HEK293 (cell line): ENCODE measurements at regions of chr10 and their contacts with region 1.

Region 1: GRCh38 chr10:113802997-113803396 is 50.9 kb downstream of the DCLRE1A start:
- H3K4me3 ChIP-seq: no peak overlapping the region
- H3K27ac ChIP-seq: no peak overlapping the region
- H3K4me1 ChIP-seq: no peaks in the 10 kb centered on the region
- CTCF ChIP-seq: no peak

Region 2: GRCh38 chr10:113515601-113516000 is 287.4 kb before region 1 on chr10:
- CTCF ChIA-PET with region 1: no interaction called
- POLR2A ChIA-PET with region 1: no interaction called
- H3K4me3 ChIP-seq: no peak overlapping the region
- H3K27ac ChIP-seq: no peak overlapping the region
- H3K4me1 ChIP-seq: peaks cover 8% of the 10 kb centered on the region
- CTCF ChIP-seq: no peak

Region 3: DNA sequence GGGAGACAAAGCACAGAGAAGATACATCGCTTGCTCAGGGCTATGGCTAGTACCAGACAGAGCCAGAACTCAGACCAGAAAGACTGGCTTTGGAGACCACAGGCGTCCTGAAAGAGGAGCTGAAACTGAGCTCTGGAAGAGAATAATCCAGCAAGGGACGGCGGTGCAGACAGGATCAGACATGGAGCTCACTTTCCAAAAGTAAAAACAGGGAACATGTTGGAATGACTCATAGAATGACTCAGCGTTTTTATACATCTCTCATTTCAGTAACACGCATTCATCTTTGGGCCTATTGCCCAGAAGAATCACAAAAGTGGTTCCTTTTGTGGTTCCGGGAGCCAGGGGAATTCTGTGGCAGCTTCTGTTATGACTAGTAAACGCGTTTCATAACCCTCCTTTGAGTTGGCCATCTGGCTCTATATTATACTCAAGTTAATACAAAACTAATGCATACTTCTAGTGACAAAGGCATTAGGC is 14.4 kb before region 1 on chr10:
- CTCF ChIA-PET with region 1: interaction called, 10 read pairs
- POLR2A ChIA-PET with region 1: no interaction called
- H3K4me3 ChIP-seq: no peak overlapping the region
- H3K27ac ChIP-seq: no peak overlapping the region
- H3K4me1 ChIP-seq: no peaks in the 10 kb centered on the region
- CTCF ChIP-seq: no peak

Region 4: DNA sequence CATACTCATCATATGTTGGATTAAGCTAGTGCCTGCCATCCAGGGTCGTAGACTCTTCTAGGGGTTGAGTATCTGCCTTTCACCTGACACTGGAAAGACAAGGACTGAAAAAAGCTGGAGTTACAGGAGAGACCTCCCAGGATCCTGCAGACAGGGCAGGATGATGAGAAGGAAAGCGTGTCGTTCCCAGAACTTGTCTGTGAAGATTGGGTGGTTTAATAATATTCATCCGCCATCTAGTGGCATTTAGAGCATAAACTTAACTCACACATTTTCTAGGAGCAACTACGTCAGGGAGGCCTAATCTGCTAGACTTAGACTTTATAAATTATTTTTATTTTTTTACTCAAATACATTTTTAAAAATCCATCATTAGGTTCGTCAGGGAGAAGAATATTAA is 300.3 kb after region 1 on chr10:
- CTCF ChIA-PET with region 1: interaction called, 28 read pairs
- POLR2A ChIA-PET with region 1: no interaction called
- H3K4me3 ChIP-seq: no peak overlapping the region
- H3K27ac ChIP-seq: no peak overlapping the region
- H3K4me1 ChIP-seq: no peaks in the 10 kb centered on the region
- CTCF ChIP-seq: no peak

Region 5: GRCh38 chr10:114110174-114110972 is 307.4 kb after region 1 on chr10:
- CTCF ChIA-PET with region 1: interaction called, 13 read pairs
- POLR2A ChIA-PET with region 1: no interaction called
- H3K4me3 ChIP-seq: no peak overlapping the region
- H3K27ac ChIP-seq: no peak overlapping the region
- H3K4me1 ChIP-seq: no peaks in the 10 kb centered on the region
- CTCF ChIP-seq: no peak